ENCODE measurements at regions of chr1 and their contacts with region 1.

Region 1: GRCh38 chr1:11295905-11296304 is 22.9 kb downstream of the UBIAD1 start:
- DNase-seq: no peak
- ATAC-seq: no peak
- H3K4me3 Mint-ChIP-seq: no peak overlapping the region
- H3K27ac Mint-ChIP-seq: no peak overlapping the region
- H3K4me1 Mint-ChIP-seq: peaks cover 50% of the 10 kb centered on the region
- H3K27me3 Mint-ChIP-seq: no peaks in the 10 kb centered on the region

Region 2: DNA sequence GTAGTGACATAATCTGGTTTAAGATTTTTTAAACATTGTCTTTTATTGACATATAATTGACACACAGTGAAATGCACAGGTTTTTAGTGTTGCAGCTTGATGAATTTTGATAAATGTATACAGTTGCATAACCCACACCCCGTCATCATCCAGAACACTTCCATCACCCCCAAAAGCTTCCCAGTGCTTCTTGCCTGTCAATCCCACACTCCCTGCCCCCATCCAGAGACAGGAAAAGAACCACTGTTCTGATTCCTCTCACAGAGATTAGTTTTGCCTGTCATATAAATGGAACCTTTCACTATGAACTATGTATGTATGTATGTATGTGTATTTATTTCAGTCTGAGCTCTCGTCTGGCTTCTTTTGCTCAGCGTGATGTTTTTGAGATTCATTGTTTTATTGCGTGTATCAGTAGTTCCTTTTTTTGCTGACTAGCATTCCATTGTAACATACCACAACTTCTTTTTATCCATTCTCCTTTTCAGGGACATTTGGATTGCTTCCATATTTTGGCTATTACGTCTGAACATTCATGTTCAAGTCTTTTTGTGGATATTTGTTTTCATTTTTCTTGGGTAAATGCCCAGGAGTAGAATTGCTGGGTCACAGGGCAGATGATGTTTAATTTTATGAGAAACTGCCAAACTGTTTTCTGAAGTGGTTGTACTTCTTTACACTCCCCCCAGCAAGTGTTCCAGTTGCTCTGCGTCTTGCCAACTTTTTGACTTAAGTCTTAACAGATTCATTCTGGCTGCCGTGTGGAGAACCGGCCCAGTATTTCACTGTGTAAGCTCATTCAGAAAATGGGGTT is 14.2 kb before region 1 on chr1:
- CTCF ChIA-PET with region 1: interaction called, 12 read pairs
- POLR2A ChIA-PET with region 1: interaction called, 4 read pairs
- DNase-seq: no peak
- ATAC-seq: no peak
- H3K4me3 Mint-ChIP-seq: peak overlapping the region; percentile 28
- H3K27ac Mint-ChIP-seq: peak overlapping the region; percentile 86
- H3K4me1 Mint-ChIP-seq: peaks cover 85% of the 10 kb centered on the region
- H3K27me3 Mint-ChIP-seq: no peaks in the 10 kb centered on the region

Measured in activated CD8-positive, alpha-beta T cell treated with anti-CD3 and anti-CD28 coated beads, Interleukin-2, amount 10 ng/mL, durations not matched to agents 7 days and 5 days (primary cell).